A549 (cell line): ENCODE measurements at regions of chr22 and their contacts with region 1.

Region 1: GRCh38 chr22:24244101-24244787 is 638 bp downstream of the GGT5 start:
- DNase-seq: no peak
- ATAC-seq: no peak
- H3K4me3 ChIP-seq: no peak overlapping the region
- H3K27ac ChIP-seq: peak overlapping the region; percentile 82 to 100; a peak in 5 of 6 replicates
- H3K4me1 ChIP-seq: peaks cover 48% of the 10 kb centered on the region
- CTCF ChIP-seq: no peak
- EP300 ChIP-seq: no peak
- POLR2A ChIP-seq: no peak
- RAD21 ChIP-seq: no peak

Region 2: GRCh38 chr22:24200616-24201212 is 43.5 kb before region 1 on chr22:
- CTCF ChIA-PET with region 1: interaction called, 16 read pairs
- POLR2A ChIA-PET with region 1: no interaction called
- DNase-seq: peak; percentile 60 to 84
- ATAC-seq: peak; percentile 88 to 96
- H3K4me3 ChIP-seq: no peak overlapping the region
- H3K27ac ChIP-seq: peak overlapping the region; percentile 91 to 100
- H3K4me1 ChIP-seq: peaks cover 73% of the 10 kb centered on the region
- CTCF ChIP-seq: no peak
- EP300 ChIP-seq: peak; percentile 53 to 92; a peak in 3 of 5 replicates
- POLR2A ChIP-seq: no peak
- RAD21 ChIP-seq: 0 out of 5 replicates have a peak, but pooled peaks of 1 of the 2 experiments have one; percentile 20

Region 3: GRCh38 chr22:24214467-24215285 is 29.6 kb before region 1 on chr22:
- CTCF ChIA-PET with region 1: interaction called, 15 read pairs
- POLR2A ChIA-PET with region 1: no interaction called
- DNase-seq: no peak
- ATAC-seq: peak; percentile 61 to 64; a peak in 3 of 6 replicates
- H3K4me3 ChIP-seq: no peak overlapping the region
- H3K27ac ChIP-seq: peak overlapping the region; percentile 62 to 81
- H3K4me1 ChIP-seq: peaks cover 12% of the 10 kb centered on the region; the same call in 2 of the 3 replicates
- CTCF ChIP-seq: no peak
- EP300 ChIP-seq: no peak
- POLR2A ChIP-seq: no peak
- RAD21 ChIP-seq: no peak